Activated CD8-positive, alpha-beta T cell treated with anti-CD3 and anti-CD28 coated beads, Interleukin-2, amount 10 ng/mL, durations not matched to agents 7 days and 5 days (primary cell): ENCODE measurements at regions of chr6 and their contacts with region 1.

Region 1: GRCh38 chr6:135088818-135089809 is 34.5 kb upstream of the HBS1L start:
- DNase-seq: peak; percentile 62
- ATAC-seq: peak; percentile 78
- H3K4me3 Mint-ChIP-seq: peak overlapping the region; percentile 69
- H3K27ac Mint-ChIP-seq: peak overlapping the region; percentile 88
- H3K4me1 Mint-ChIP-seq: peaks cover 78% of the 10 kb centered on the region
- H3K27me3 Mint-ChIP-seq: no peaks in the 10 kb centered on the region

Region 2: GRCh38 chr6:135054569-135055498 is 34.3 kb before region 1 on chr6 and contains the start of gene HBS1L:
- CTCF ChIA-PET with region 1: interaction called, 59 read pairs
- POLR2A ChIA-PET with region 1: interaction called, 90 read pairs
- DNase-seq: peak; percentile 98
- ATAC-seq: peak; percentile 99
- H3K4me3 Mint-ChIP-seq: peak within 1 kb of the TSS; percentile 97
- H3K27ac Mint-ChIP-seq: peak within 1 kb of the TSS; percentile 98
- H3K4me1 Mint-ChIP-seq: peaks cover 31% of the 10 kb centered on the region
- H3K27me3 Mint-ChIP-seq: no peaks in the 10 kb centered on the region
- total RNA-seq, gene HBS1L: 72.8 to 77.5 TPM

Region 3: DNA sequence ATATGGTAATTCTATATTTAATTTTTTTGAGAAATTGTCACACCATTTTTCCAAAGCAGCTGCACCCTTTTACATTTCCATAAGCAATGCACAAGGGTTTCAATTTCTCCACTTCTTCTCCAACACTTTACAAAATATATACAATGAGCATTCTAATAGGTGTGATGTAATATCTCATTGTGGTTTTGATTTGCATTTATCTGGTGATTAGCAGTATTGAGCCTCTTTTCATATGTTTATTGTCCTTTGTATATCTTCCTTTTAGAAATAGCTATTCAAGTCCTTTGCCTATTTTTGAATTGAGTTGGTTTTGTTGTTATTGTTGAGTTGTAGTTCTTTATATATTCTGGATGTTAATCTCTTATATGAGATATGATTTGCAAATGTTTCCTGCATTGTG is 13.1 kb after region 1 on chr6:
- CTCF ChIA-PET with region 1: interaction called, 12 read pairs
- POLR2A ChIA-PET with region 1: interaction called, 4 read pairs
- DNase-seq: no peak
- ATAC-seq: no peak
- H3K4me3 Mint-ChIP-seq: no peak overlapping the region
- H3K27ac Mint-ChIP-seq: no peak overlapping the region
- H3K4me1 Mint-ChIP-seq: peaks cover 37% of the 10 kb centered on the region
- H3K27me3 Mint-ChIP-seq: no peaks in the 10 kb centered on the region

Region 4: DNA sequence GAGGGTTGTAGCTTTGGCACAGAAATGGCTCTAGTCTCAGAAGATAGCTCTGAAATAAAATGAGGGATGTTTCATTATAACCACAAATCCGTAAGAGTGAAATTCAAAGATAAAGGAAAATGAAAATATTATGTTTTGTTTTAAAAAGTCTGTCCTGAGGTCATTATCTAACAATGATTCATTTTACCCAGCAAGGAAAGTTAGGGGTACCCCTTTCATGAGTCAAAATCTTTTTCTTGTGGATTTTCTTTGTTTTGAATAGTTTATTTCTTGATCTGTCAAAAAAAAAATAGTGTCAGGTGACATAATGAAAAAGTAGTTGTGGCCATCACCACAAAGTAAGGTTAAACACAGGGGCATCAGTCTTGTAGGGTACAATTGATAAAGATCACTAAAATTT is 32.3 kb after region 1 on chr6:
- CTCF ChIA-PET with region 1: interaction called, 11 read pairs
- POLR2A ChIA-PET with region 1: interaction called, 4 read pairs
- DNase-seq: no peak
- ATAC-seq: no peak
- H3K4me3 Mint-ChIP-seq: no peak overlapping the region
- H3K27ac Mint-ChIP-seq: no peak overlapping the region
- H3K4me1 Mint-ChIP-seq: peaks cover 39% of the 10 kb centered on the region
- H3K27me3 Mint-ChIP-seq: no peaks in the 10 kb centered on the region

Region 5: GRCh38 chr6:135145063-135145800 is 56.1 kb after region 1 on chr6:
- CTCF ChIA-PET with region 1: interaction called, 58 read pairs
- POLR2A ChIA-PET with region 1: interaction called, 7 read pairs
- DNase-seq: peak; percentile 49
- ATAC-seq: peak; percentile 76
- H3K4me3 Mint-ChIP-seq: peak overlapping the region; percentile 57
- H3K27ac Mint-ChIP-seq: peak overlapping the region; percentile 82
- H3K4me1 Mint-ChIP-seq: peaks cover 54% of the 10 kb centered on the region
- H3K27me3 Mint-ChIP-seq: no peaks in the 10 kb centered on the region